ENCODE measurements at regions of chr12 and their contacts with region 1.

Region 1: DNA sequence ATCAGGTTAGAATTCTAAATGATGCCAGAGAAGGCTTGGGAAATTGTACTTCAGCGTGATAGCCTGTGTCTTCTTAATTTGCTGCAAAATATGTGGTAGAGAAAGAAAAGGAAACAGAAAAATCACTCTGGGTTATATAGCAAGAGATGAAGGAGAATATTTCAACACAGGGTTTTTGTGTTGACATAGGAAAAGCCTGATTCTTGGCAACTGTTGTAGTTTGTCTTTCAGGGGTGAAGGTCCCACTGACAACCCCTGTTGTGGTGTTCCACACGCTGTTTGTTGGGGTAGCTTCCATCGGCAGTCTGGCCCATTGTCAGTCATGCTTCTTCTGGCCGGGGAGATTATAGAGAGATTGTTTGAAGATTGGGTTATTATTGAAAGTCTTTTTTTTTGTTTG is 13.8 kb upstream of the SLCO1C1 start:
- DNase-seq: no peak
- ATAC-seq: no peak
- H3K4me3 ChIP-seq: no peak overlapping the region
- H3K4me3 Mint-ChIP-seq: no peak overlapping the region
- H3K27ac ChIP-seq: no peak overlapping the region
- H3K27ac Mint-ChIP-seq: no peak overlapping the region
- H3K4me1 ChIP-seq: no peaks in the 10 kb centered on the region
- H3K4me1 Mint-ChIP-seq: no peaks in the 10 kb centered on the region
- H3K27me3 ChIP-seq: no peaks in the 10 kb centered on the region
- H3K27me3 Mint-ChIP-seq: no peaks in the 10 kb centered on the region

Region 2: DNA sequence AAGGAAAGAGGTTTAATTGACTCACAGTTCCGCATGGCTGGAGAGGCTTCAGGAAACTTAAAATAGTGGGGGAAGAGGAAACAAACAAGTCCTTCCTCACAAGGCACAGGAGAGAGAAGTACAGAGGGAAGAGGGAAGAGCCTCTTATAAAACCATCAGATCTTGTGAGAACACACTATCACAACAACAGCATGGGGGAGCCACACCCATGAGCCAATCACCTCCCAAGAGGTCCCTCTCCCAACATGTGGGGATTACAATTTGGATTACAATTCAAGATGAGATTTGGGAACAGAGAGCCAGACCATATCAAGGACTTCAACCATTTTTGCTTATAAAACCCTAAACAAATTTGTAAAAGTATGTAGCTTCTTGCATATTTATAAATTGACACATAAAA is 59.6 kb after region 1 on chr12:
- CTCF ChIA-PET with region 1: interaction called, 3 to 11 read pairs
- POLR2A ChIA-PET with region 1: no interaction called
- DNase-seq: no peak
- ATAC-seq: no peak
- H3K4me3 ChIP-seq: no peak overlapping the region
- H3K4me3 Mint-ChIP-seq: no peak overlapping the region
- H3K27ac ChIP-seq: no peak overlapping the region
- H3K27ac Mint-ChIP-seq: no peak overlapping the region
- H3K4me1 ChIP-seq: no peaks in the 10 kb centered on the region
- H3K4me1 Mint-ChIP-seq: no peaks in the 10 kb centered on the region
- H3K27me3 ChIP-seq: no peaks in the 10 kb centered on the region
- H3K27me3 Mint-ChIP-seq: no peaks in the 10 kb centered on the region

Measured in T-cell (primary cell).